ENCODE measurements at regions of chrX and their contacts with region 1.

Region 1: DNA sequence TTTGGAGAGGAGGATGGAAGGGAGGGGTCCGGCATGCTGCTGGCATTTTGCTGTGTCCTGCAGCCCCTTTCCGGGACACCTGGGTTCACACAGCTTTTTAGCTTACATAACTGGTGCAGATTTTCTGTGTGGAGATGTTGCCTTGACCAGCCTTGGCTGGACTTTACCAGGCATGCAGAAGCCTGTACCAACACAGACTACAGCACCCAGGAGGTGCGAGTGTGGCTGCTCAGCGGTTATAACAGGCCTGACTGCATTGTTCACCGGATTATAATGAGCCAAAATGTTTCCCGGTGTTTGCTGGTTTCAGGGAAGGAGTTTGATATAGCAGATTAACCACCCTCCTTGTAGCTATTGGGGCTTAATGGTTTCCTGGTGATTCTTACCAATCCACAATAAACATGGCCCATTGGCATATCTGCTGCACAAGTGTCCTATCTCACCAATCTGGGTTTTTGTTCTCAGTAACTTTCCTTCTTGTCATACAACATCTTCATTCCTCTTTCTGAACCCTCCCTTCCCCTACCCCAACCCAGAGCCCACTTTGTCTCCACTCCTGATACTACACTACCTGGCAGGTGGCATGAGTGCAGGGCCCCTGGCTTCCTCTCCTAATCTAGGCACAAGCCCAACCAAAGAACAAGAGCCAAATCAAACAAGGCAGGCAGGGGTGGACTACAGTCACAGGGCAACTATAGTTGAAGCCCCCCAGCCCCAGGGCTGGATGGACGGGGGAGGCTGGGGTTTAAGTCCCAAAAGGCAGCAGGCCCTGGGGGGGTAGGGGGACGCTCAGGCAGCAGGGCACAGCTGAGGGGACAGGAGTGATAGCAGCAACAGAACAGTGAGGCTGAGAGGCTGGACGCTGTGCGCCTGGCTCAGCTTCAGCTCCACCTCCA is 4.0 kb downstream of the RPL10 start:
- DNase-seq: no peak
- ATAC-seq: no peak
- H3K4me3 ChIP-seq: no peak overlapping the region
- H3K4me3 Mint-ChIP-seq: no peak overlapping the region
- H3K27ac ChIP-seq: no peak overlapping the region
- H3K27ac Mint-ChIP-seq: no peak overlapping the region
- H3K4me1 ChIP-seq: peaks cover 3 to 28% of the 10 kb centered on the region in 2 experiments
- H3K4me1 Mint-ChIP-seq: peaks cover 19 to 28% (median 20%) of the 10 kb centered on the region in 3 donors
- H3K27me3 ChIP-seq: no peaks in the 10 kb centered on the region
- H3K27me3 Mint-ChIP-seq: no peaks in the 10 kb centered on the region

Region 2: DNA sequence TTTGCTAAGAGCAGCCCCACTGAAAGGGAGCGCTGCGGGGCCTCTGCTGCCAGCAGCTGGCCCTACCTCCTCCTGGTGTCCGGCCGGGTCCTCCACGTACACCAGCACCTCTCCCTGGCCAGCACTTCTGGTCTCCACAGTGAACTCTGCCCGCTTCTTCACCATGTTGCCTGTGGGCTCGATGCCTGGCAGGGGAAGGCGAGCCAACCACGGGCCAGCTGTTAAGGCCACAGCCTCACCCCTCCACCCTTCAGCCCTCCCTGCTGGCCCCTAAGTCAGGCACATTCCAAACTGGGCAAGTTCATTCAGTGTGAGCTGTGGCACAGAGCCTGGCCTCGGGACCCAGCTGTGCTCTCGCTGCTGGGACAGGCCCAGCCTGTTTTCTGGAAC is 35.5 kb before region 1 on chrX:
- CTCF ChIA-PET with region 1: no interaction called
- POLR2A ChIA-PET with region 1: no interaction called
- DNase-seq: no peak
- ATAC-seq: no peak
- H3K4me3 ChIP-seq: no peak overlapping the region
- H3K4me3 Mint-ChIP-seq: peak overlapping the region in 1 of 3 donors; percentile 19
- H3K27ac ChIP-seq: peak overlapping the region; percentile 97
- H3K27ac Mint-ChIP-seq: peak overlapping the region; percentile 36 to 61
- H3K4me1 ChIP-seq: peaks cover 0 to 70% of the 10 kb centered on the region in 2 experiments
- H3K4me1 Mint-ChIP-seq: peaks cover 20 to 29% (median 27%) of the 10 kb centered on the region in 3 donors
- H3K27me3 ChIP-seq: no peaks in the 10 kb centered on the region
- H3K27me3 Mint-ChIP-seq: no peaks in the 10 kb centered on the region

Region 3: GRCh38 chrX:154428176-154429010 is 26.2 kb after region 1 on chrX and contains the start of gene ATP6AP1:
- CTCF ChIA-PET with region 1: interaction called in 1 of 2 experiments, 11 read pairs
- POLR2A ChIA-PET with region 1: no interaction called
- DNase-seq: peak; percentile 67 to 91 (median 86)
- ATAC-seq: peak; percentile 98 to 99 (median 98)
- H3K4me3 ChIP-seq: peak within 1 kb of the TSS; percentile 41 to 67
- H3K4me3 Mint-ChIP-seq: peak within 1 kb of the TSS; percentile 74 to 83 (median 76)
- H3K27ac ChIP-seq: peak within 1 kb of the TSS; percentile 60
- H3K27ac Mint-ChIP-seq: peak within 1 kb of the TSS; percentile 81 to 83
- H3K4me1 ChIP-seq: peaks cover 0 to 28% of the 10 kb centered on the region in 2 experiments
- H3K4me1 Mint-ChIP-seq: peaks cover 18 to 30% (median 29%) of the 10 kb centered on the region in 3 donors
- H3K27me3 ChIP-seq: no peaks in the 10 kb centered on the region
- H3K27me3 Mint-ChIP-seq: peaks cover 0 to 7% of the 10 kb centered on the region in 2 donors
- total RNA-seq, gene ATP6AP1: 37.9 to 56.8 (median 53.6) TPM

Measured in T-cell (primary cell).